Activated CD4-positive, alpha-beta T cell treated with anti-CD3 and anti-CD28 coated beads, Interleukin-2, amount 10 ng/mL, durations not matched to agents 7 days and 5 days (primary cell): ENCODE measurements at regions of chr1 and their contacts with region 1.

Region 1: GRCh38 chr1:23598424-23598823 is 39.1 kb upstream of the ID3 start:
- DNase-seq: no peak
- H3K4me3 Mint-ChIP-seq: no peak overlapping the region
- H3K27ac Mint-ChIP-seq: peak overlapping the region; percentile 86
- H3K4me1 Mint-ChIP-seq: peaks cover 93% of the 10 kb centered on the region
- H3K27me3 Mint-ChIP-seq: no peaks in the 10 kb centered on the region

Region 2: GRCh38 chr1:23530747-23531561 is 67.5 kb before region 1 on chr1 and contains the start of gene E2F2:
- CTCF ChIA-PET with region 1: no interaction called
- POLR2A ChIA-PET with region 1: no interaction called
- DNase-seq: peak; percentile 88
- H3K4me3 Mint-ChIP-seq: peak within 1 kb of the TSS; percentile 98
- H3K27ac Mint-ChIP-seq: peak within 1 kb of the TSS; percentile 95
- H3K4me1 Mint-ChIP-seq: peaks cover 76% of the 10 kb centered on the region
- H3K27me3 Mint-ChIP-seq: no peaks in the 10 kb centered on the region
- total RNA-seq, gene E2F2: 107 to 112 TPM

Region 3: GRCh38 chr1:23564529-23565122 is 33.8 kb before region 1 on chr1:
- CTCF ChIA-PET with region 1: no interaction called
- POLR2A ChIA-PET with region 1: no interaction called
- DNase-seq: no peak
- H3K4me3 Mint-ChIP-seq: no peak overlapping the region
- H3K27ac Mint-ChIP-seq: no peak overlapping the region
- H3K4me1 Mint-ChIP-seq: peaks cover 51% of the 10 kb centered on the region
- H3K27me3 Mint-ChIP-seq: peaks cover 62% of the 10 kb centered on the region

Region 4: GRCh38 chr1:23613191-23614031 is 15.0 kb after region 1 on chr1:
- CTCF ChIA-PET with region 1: interaction called, 12 read pairs
- POLR2A ChIA-PET with region 1: interaction called, 5 read pairs
- DNase-seq: peak; percentile 73
- H3K4me3 Mint-ChIP-seq: peak overlapping the region; percentile 29
- H3K27ac Mint-ChIP-seq: peak overlapping the region; percentile 96
- H3K4me1 Mint-ChIP-seq: peaks cover 76% of the 10 kb centered on the region
- H3K27me3 Mint-ChIP-seq: no peaks in the 10 kb centered on the region